ENCODE measurements at regions of chr3 and their contacts with region 1.

Region 1: GRCh38 chr3:33717866-33718594 is at the start of gene CLASP2:
- DNase-seq: peak; percentile 83
- H3K4me3 Mint-ChIP-seq: peak within 1 kb of the TSS; percentile 86
- H3K27ac Mint-ChIP-seq: peak within 1 kb of the TSS; percentile 91
- H3K4me1 Mint-ChIP-seq: peaks cover 10% of the 10 kb centered on the region
- H3K27me3 Mint-ChIP-seq: no peaks in the 10 kb centered on the region
- total RNA-seq, gene CLASP2: 40.4 to 41.4 TPM

Region 2: GRCh38 chr3:32414520-32415202 is 1303.4 kb before region 1 on chr3:
- CTCF ChIA-PET with region 1: no interaction called
- intact Hi-C with region 1: no loop called
- DNase-seq: peak; percentile 78
- H3K4me3 Mint-ChIP-seq: peak overlapping the region; percentile 40
- H3K27ac Mint-ChIP-seq: peak overlapping the region; percentile 94
- H3K4me1 Mint-ChIP-seq: peaks cover 81% of the 10 kb centered on the region
- H3K27me3 Mint-ChIP-seq: no peaks in the 10 kb centered on the region

Region 3: GRCh38 chr3:33131331-33132018 is 586.6 kb before region 1 on chr3:
- CTCF ChIA-PET with region 1: no interaction called
- intact Hi-C with region 1: loop called (anchors 1 kb)
- DNase-seq: peak; percentile 50
- H3K4me3 Mint-ChIP-seq: no peak overlapping the region
- H3K27ac Mint-ChIP-seq: no peak overlapping the region
- H3K4me1 Mint-ChIP-seq: peaks cover 4% of the 10 kb centered on the region
- H3K27me3 Mint-ChIP-seq: no peaks in the 10 kb centered on the region

Region 4: DNA sequence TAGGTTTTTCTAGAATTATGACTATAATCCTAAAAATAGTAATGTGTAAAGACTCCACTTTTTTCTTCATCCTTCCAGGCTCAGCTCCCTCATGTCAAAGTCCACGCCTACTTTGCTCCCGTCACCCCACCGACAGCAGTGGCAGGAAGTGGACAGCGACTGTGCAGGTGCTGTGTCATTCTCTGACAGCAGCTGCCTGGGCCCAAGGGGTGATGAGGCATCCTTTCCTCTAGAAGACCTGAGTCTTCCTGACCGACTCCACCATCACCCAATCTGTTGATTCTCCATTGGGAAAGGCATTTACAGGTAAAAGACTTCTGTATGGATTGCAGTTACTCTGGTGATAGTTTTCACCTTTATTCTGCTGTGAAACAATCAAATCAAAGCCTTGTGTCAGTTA is 332.6 kb before region 1 on chr3:
- CTCF ChIA-PET with region 1: interaction called, 3 read pairs
- intact Hi-C with region 1: loop called (anchors 5 kb)
- DNase-seq: peak; percentile 79
- H3K4me3 Mint-ChIP-seq: no peak overlapping the region
- H3K27ac Mint-ChIP-seq: peak overlapping the region; percentile 65
- H3K4me1 Mint-ChIP-seq: peaks cover 11% of the 10 kb centered on the region
- H3K27me3 Mint-ChIP-seq: no peaks in the 10 kb centered on the region

Region 5: GRCh38 chr3:33658991-33659848 is 58.8 kb before region 1 on chr3:
- CTCF ChIA-PET with region 1: interaction called, 3 read pairs
- intact Hi-C with region 1: loop called (anchors 1 kb)
- DNase-seq: peak; percentile 32
- H3K4me3 Mint-ChIP-seq: peak overlapping the region; percentile 49
- H3K27ac Mint-ChIP-seq: no peak overlapping the region
- H3K4me1 Mint-ChIP-seq: peaks cover 29% of the 10 kb centered on the region
- H3K27me3 Mint-ChIP-seq: no peaks in the 10 kb centered on the region

Region 6: DNA sequence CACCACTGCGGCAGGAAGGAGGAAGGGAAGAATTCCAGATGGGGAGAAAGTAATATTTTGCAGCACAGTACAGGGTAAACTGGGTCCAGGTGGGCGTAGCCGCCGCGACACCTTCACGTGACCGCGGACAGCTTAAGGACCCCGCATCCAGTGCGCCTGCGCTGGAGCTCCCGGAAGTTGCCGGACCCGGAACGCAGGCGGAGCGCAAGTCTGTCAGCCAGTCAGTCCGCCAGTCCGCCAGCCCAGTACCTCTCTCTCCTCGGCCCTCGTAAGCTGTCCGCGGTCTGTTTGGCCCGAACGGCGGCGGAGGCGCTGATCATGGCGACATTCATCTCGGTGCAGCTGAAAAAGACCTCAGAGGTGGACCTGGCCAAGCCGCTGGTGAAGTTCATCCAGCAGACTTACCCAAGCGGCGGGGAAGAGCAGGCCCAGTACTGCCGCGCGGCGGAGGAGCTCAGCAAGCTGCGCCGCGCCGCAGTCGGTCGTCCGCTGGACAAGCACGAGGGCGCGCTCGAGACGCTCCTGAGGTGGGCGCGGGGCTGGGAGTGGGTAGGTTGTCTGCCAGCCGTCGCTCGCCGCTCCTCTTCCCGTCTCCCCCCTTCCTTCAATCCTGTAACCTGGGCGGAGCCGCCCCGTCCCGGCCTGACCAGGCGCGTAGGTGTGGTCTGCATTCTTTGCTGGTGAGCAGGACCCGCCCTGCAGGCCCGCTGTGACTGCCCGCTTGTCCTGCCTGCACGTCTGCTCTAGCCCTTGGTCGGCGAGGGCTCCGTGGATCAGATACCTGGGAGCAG is 80.6 kb after region 1 on chr3 and contains the start of gene PDCD6IP:
- CTCF ChIA-PET with region 1: no interaction called
- intact Hi-C with region 1: loop called (anchors 2 kb)
- DNase-seq: peak; percentile 88
- H3K4me3 Mint-ChIP-seq: peak within 1 kb of the TSS; percentile 95
- H3K27ac Mint-ChIP-seq: peak within 1 kb of the TSS; percentile 83
- H3K4me1 Mint-ChIP-seq: peaks cover 56% of the 10 kb centered on the region
- H3K27me3 Mint-ChIP-seq: no peaks in the 10 kb centered on the region
- total RNA-seq, gene PDCD6IP: 126 to 127 TPM